Activated T-helper 1 cell treated with anti-CD3 and anti-CD28 coated beads, Interleukin-12 subunit alpha, Interleukin-12 subunit beta, Interleukin-2, Interleukin-4 antibody, amounts not matched to agents 30 ng/mL and 10 ng/mL and 1 ng/mL, durations not matched to agents 14 hours and 24 hours and 36 hours (primary cell): ENCODE measurements at regions of chr13 and their contacts with region 1.

Region 1: GRCh38 chr13:94317063-94317491 is 162.4 kb downstream of the DCT start:
- DNase-seq: peak; percentile 13
- H3K4me3 Mint-ChIP-seq: peak overlapping the region; percentile 44
- H3K27ac Mint-ChIP-seq: peak overlapping the region; percentile 86
- H3K4me1 Mint-ChIP-seq: peaks cover 80% of the 10 kb centered on the region
- H3K27me3 Mint-ChIP-seq: no peaks in the 10 kb centered on the region

Region 2: GRCh38 chr13:94345374-94346195 is 28.5 kb after region 1 on chr13:
- intact Hi-C with region 1: loop called (anchors 1 kb)
- DNase-seq: no peak
- H3K4me3 Mint-ChIP-seq: no peak overlapping the region
- H3K27ac Mint-ChIP-seq: no peak overlapping the region
- H3K4me1 Mint-ChIP-seq: peaks cover 28% of the 10 kb centered on the region
- H3K27me3 Mint-ChIP-seq: peaks cover 6% of the 10 kb centered on the region